AG04449 (cell line): ENCODE measurements at regions of chr1 and their contacts with region 1.

Region 1: DNA sequence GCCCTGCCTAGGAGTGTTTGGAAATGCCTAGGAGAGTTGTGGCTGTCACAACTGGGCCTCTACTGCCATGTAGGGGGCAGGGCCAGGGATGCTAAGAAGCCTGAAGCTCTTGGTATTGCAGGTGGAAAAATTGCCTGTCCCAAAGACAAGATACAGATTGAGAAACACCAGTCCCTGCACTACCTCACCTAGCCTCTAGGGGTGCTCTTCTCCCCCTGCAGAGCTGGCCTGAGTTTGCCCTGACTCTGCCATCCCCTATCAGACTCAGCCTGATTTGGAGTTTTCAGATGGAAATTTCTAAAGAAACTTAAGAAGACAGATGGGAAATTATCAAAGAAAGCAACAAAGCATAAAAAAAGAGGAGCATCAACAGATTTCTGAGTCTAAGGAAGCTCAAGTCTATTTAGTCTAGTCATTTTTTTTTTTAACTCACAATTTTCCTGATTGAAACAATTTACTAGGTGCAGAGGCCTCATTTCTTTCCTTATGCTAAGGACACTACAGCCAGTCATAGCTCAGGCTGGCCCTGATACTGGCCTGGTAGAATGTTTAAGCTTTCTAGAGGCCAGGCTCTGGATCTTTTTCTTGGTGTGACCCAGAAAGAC is 61.4 kb upstream of the LRRN2 start:
- DNase-seq: no peak
- H3K4me3 ChIP-seq: no peak overlapping the region
- CTCF ChIP-seq: peak; percentile 94

Region 2: GRCh38 chr1:204730826-204731459 is 16.0 kb before region 1 on chr1:
- CTCF ChIA-PET with region 1: interaction called, 26 read pairs
- POLR2A ChIA-PET with region 1: no interaction called
- DNase-seq: no peak
- H3K4me3 ChIP-seq: no peak overlapping the region
- CTCF ChIP-seq: no peak